Spleen (tissue), 13 donors: ENCODE measurements at regions of chr11 and their contacts with region 1.

Region 1: DNA sequence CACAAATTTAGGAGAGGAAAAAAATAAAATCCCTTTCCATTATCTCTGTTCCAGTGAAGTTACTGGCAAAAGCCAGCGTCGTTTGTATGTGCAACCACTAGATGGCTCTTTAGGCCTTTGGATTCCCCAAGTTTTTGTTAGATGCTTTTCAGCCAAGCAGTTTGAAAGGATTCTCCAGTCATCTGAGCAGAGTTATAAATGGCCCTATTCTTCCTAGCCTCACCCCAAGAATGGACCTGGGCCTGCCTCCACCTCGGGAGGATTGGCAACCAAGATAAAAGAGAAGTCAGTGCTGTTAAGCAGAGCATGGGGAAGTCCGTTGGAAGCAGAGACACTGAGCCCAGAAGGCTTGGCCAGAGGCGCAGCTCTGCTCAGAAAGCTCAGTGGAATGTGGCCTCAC is 15.4 kb downstream of the FAM181B start:
- DNase-seq: no peak
- H3K4me3 ChIP-seq: no peak overlapping the region
- H3K27ac ChIP-seq: no peak overlapping the region
- H3K4me1 ChIP-seq: peaks cover 0 to 6% (median 0%) of the 10 kb centered on the region in 6 donors
- H3K27me3 ChIP-seq: peaks cover 0 to 7% (median 0%) of the 10 kb centered on the region in 7 donors
- CTCF ChIP-seq: peak; percentile 25 to 76 (median 54)
- POLR2A ChIP-seq: no peak

Region 2: DNA sequence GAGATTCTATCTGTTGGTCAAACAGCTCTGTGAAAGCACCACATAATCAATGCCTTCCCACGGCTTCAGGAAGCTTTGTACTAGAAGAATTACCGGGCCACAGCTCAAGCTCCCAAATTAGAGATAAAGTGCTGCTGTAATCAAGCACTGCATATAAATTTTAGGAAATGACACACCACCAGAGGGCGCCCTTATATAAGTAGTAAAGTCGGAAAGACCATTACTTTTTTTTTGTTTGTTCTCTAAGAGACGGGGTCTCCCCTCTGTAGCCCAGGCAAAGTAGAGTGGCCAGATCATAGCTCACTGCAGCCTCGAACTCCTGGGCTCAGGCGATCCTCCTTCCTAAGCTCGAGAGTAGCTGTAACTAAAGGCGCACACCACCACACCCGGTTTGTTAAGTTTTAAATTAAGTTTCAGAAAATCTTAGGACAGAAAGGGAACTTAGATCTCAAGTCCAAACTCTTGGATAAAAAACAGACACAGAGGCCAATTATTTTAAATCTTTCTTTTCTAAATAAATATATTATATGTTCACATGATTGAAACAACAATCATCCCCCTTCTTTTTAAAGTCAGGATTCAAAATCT is 149.3 kb after region 1 on chr11:
- intact Hi-C with region 1: loop called (anchors 5 kb)
- DNase-seq: peak; percentile 62
- H3K4me3 ChIP-seq: no peak overlapping the region
- H3K27ac ChIP-seq: peak overlapping the region in 1 of 8 donors; percentile 39
- H3K4me1 ChIP-seq: peaks cover 0 to 48% (median 10%) of the 10 kb centered on the region in 6 donors
- H3K27me3 ChIP-seq: peaks cover 0 to 8% (median 0%) of the 10 kb centered on the region in 7 donors
- CTCF ChIP-seq: peak; percentile 49 to 83 (median 68)
- POLR2A ChIP-seq: no peak

Region 3: GRCh38 chr11:82927254-82927880 is 209.1 kb after region 1 on chr11:
- intact Hi-C with region 1: loop called (anchors 10 kb)
- DNase-seq: no peak
- H3K4me3 ChIP-seq: no peak overlapping the region
- H3K27ac ChIP-seq: peak overlapping the region in 3 of 8 donors; percentile 5 to 25 (median 20)
- H3K4me1 ChIP-seq: peaks cover 0 to 58% (median 17%) of the 10 kb centered on the region in 6 donors
- H3K27me3 ChIP-seq: no peaks in the 10 kb centered on the region
- CTCF ChIP-seq: peak; percentile 45 to 86 (median 71)
- POLR2A ChIP-seq: no peak

Region 4: DNA sequence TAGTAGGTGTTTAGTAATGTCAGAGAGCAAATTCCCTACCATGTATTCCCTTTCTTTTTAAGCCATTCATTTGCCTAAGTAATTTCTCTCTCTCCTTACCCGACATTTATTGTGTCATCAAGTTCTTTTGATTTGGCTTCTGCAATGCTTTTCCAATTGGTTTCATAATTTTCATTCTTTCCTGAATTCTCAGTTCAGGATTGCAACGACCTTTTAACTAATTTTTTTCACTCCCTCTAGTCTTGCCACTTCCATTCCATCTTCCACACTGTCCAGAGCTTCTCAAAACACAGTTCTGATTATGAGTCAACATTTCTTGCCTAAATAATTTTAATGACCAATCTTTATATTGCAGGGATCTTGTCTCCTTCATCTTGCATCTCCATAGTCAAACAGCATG is 394.6 kb after region 1 on chr11:
- intact Hi-C with region 1: no loop called
- DNase-seq: no peak
- H3K4me3 ChIP-seq: no peak overlapping the region
- H3K27ac ChIP-seq: no peak overlapping the region
- H3K4me1 ChIP-seq: peaks cover 9 to 37% (median 27%) of the 10 kb centered on the region in 6 donors
- H3K27me3 ChIP-seq: no peaks in the 10 kb centered on the region
- CTCF ChIP-seq: no peak
- POLR2A ChIP-seq: no peak

Region 5: DNA sequence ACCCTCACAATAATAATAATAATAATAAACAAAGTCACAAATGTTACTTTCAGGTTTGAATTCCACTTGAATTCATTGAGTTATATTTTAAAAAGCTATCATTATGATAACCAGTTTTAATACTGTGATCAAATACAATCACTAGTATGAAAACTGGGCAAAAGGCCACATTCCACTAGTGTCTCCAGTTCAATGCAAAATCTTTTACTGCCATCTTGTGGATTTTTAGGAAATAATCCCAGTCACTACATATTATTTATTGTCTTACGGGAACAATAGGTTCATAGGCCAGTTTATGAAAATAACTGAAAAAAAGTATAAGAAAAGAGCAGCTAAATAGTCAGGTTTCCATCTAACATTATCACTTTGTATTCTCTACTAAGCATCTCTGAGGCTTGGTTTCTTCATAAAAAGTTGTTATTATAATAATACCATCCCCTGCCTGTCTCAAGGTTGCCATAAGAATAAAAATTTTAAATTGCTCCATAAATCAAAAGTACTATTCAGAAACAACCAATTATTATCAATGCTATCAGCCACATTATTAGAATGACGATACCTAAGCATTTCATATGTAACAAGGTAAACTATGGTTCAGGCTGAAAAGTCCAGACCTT is 1101.7 kb after region 1 on chr11:
- intact Hi-C with region 1: loop called (anchors 10 kb)
- DNase-seq: no peak
- H3K4me3 ChIP-seq: no peak overlapping the region
- H3K27ac ChIP-seq: no peak overlapping the region
- H3K4me1 ChIP-seq: no peaks in the 10 kb centered on the region
- H3K27me3 ChIP-seq: no peaks in the 10 kb centered on the region
- CTCF ChIP-seq: peak in 8 of 11 experiments; percentile 19 to 56 (median 38)
- POLR2A ChIP-seq: no peak